ENCODE measurements at regions of chrX and their contacts with region 1.

Region 1: DNA sequence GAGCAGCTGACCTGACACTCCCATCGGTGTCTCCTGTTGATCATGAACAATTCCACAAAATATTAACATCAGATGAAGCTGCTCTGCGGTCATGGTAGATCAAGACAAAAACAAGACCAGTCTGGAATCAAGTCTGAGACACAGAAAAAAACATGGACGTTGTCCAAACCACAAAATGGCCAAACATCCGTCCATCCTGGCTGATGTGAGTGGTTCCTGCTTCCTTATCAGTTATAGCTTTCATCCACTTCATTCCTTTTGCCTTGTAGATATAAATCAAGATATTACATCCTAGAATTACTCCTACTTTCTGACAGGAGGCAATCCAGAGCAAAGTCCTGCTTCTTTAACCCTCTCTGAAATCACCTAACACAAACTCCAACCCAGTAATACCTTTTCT is 28.8 kb upstream of the PCSK1N start:
- DNase-seq: peak; percentile 13
- H3K4me3 ChIP-seq: no peak overlapping the region
- H3K27ac ChIP-seq: no peak overlapping the region
- H3K27me3 ChIP-seq: no peaks in the 10 kb centered on the region
- CTCF ChIP-seq: no peak

Region 2: DNA sequence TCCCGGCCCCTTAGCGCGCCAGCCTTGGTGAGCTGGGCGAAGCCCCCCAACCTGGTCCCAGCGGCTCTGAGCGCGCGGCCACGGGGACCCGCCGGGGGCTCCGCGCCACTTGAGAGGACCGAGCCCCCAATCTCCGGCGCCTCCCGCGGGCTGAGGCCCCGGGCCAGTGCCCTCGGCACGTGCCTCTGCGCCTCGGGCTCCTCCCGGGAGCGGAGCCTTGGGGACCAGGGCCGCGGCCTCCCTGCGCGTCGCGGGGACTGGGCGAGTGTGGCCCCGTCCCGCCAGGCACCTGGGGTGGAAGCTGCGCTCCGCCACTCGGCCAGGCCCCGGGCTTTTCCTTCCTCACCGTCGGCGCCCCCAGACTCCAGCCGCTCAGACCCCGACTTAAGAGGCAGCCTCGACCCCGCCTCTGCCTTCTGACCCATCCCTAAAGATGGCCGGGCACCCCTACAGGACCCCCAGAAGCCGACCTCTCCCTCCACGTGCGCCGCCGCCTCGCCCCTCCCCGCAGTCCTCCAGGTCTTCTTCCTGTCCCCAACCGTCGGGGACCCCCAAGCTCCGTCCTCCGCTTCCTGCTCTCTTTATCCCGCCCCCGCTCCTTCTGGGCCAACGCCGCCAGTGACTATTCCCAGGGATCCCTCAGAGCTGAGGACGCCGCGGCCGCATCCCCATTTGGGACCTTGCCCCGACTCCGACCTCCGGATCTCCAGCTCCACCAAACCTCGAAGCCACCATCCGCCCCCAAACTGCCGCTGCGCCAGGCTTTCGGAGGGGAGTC is 37.1 kb before region 1 on chrX:
- CTCF ChIA-PET with region 1: interaction called, 10 read pairs
- POLR2A ChIA-PET with region 1: no interaction called
- DNase-seq: no peak
- H3K4me3 ChIP-seq: no peak overlapping the region
- H3K27ac ChIP-seq: no peak overlapping the region
- H3K27me3 ChIP-seq: peaks cover 5% of the 10 kb centered on the region
- CTCF ChIP-seq: no peak

Region 3: GRCh38 chrX:48848847-48849246 is 15.4 kb before region 1 on chrX:
- CTCF ChIA-PET with region 1: no interaction called
- POLR2A ChIA-PET with region 1: no interaction called
- DNase-seq: no peak
- H3K4me3 ChIP-seq: no peak overlapping the region
- H3K27ac ChIP-seq: no peak overlapping the region
- H3K27me3 ChIP-seq: peaks cover 2% of the 10 kb centered on the region
- CTCF ChIP-seq: no peak

Region 4: GRCh38 chrX:48937054-48937907 is 73.1 kb after region 1 on chrX:
- CTCF ChIA-PET with region 1: no interaction called
- POLR2A ChIA-PET with region 1: no interaction called
- DNase-seq: no peak
- H3K4me3 ChIP-seq: no peak overlapping the region
- H3K27ac ChIP-seq: no peak overlapping the region
- H3K27me3 ChIP-seq: no peaks in the 10 kb centered on the region
- CTCF ChIP-seq: no peak

Measured in AG04450 (cell line).